Mammary epithelial cell (primary cell): ENCODE measurements at regions of chrX and their contacts with region 1.

Region 1: DNA sequence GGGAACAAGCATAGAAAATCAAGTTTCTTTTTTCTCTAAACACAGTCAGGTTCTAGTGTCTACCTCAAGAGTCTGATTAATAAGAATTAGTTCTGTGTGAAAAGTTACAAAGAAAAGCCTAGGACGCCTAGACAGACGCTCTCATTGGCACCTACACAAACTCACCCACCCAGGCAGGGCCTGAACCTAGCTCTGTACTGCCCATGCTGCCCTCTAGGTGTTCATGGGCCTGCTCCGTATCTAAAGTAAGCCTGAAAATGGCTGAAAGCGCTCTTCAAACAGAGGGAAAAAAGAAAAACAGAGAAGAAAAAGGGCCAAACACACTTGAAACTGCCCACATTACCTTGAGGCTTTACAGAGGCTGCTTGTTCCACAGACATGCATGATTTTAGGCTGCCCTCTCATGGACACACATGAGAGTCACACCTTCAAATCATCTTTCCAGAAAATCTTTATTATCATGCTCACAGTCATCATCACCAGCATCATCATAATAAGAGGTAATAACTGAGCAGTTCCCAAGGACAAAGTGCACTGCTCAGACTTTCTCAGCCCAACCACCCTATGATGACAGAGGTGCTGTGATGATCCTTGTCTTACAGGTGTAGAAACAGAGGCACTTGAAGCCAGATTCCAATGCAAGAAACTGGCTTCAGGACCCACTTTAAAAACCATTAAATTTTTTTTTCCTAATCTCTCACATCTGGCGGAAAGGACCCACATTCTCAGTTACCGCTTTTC is 49.6 kb downstream of the MAP7D2 start:
- DNase-seq: peak; percentile 52
- H3K4me3 ChIP-seq: no peak overlapping the region
- H3K27ac ChIP-seq: peak overlapping the region; percentile 64
- H3K4me1 ChIP-seq: peaks cover 17% of the 10 kb centered on the region
- H3K27me3 ChIP-seq: no peaks in the 10 kb centered on the region
- CTCF ChIP-seq: peak; percentile 64 to 68

Region 2: GRCh38 chrX:19544693-19545305 is 522.3 kb before region 1 on chrX:
- CTCF ChIA-PET with region 1: no interaction called
- dilution Hi-C with region 1: no loop called
- in situ Hi-C with region 1: no loop called
- intact Hi-C with region 1: loop called (anchors 1 kb)
- DNase-seq: peak; percentile 36
- H3K4me3 ChIP-seq: no peak overlapping the region
- H3K27ac ChIP-seq: no peak overlapping the region
- H3K4me1 ChIP-seq: no peaks in the 10 kb centered on the region
- H3K27me3 ChIP-seq: no peaks in the 10 kb centered on the region
- CTCF ChIP-seq: peak; percentile 79 to 82

Region 3: GRCh38 chrX:19739683-19740082 is 327.5 kb before region 1 on chrX:
- CTCF ChIA-PET with region 1: no interaction called
- dilution Hi-C with region 1: no loop called
- in situ Hi-C with region 1: no loop called
- intact Hi-C with region 1: loop called (anchors 1 kb)
- DNase-seq: peak; percentile 61
- H3K4me3 ChIP-seq: no peak overlapping the region
- H3K27ac ChIP-seq: no peak overlapping the region
- H3K4me1 ChIP-seq: no peaks in the 10 kb centered on the region
- H3K27me3 ChIP-seq: no peaks in the 10 kb centered on the region
- CTCF ChIP-seq: peak; percentile 42 to 68

Region 4: DNA sequence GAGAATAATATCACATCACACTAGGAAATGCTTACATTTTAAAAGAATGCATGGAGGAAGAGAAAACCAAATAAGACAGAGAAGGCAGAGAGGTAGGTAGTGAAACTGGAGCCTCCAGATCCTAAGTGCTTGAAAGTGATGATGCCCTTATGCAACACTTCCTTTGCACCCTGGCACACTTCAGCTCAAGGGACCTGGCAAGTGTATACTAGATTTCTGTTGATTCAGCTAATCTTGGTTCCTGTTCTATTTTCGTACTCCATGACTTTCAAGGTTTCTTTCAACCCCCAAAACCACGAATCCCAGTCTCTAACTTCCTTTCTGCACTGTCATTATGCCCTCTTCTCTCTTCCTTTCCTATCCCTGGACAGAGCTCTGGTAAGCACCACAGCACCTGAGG is 142.9 kb before region 1 on chrX:
- CTCF ChIA-PET with region 1: no interaction called
- dilution Hi-C with region 1: no loop called
- in situ Hi-C with region 1: loop called in 1 of 2 experiments (anchors 25 kb)
- intact Hi-C with region 1: loop called (anchors 1 kb)
- DNase-seq: no peak
- H3K4me3 ChIP-seq: no peak overlapping the region
- H3K27ac ChIP-seq: no peak overlapping the region
- H3K4me1 ChIP-seq: no peaks in the 10 kb centered on the region
- H3K27me3 ChIP-seq: no peaks in the 10 kb centered on the region
- CTCF ChIP-seq: no peak

Region 5: GRCh38 chrX:20042221-20042620 is 24.9 kb before region 1 on chrX:
- CTCF ChIA-PET with region 1: interaction called, 10 read pairs
- dilution Hi-C with region 1: no loop called
- in situ Hi-C with region 1: no loop called
- intact Hi-C with region 1: no loop called
- DNase-seq: no peak
- H3K4me3 ChIP-seq: no peak overlapping the region
- H3K27ac ChIP-seq: no peak overlapping the region
- H3K4me1 ChIP-seq: peaks cover 5% of the 10 kb centered on the region
- H3K27me3 ChIP-seq: no peaks in the 10 kb centered on the region
- CTCF ChIP-seq: no peak

Region 6: GRCh38 chrX:20128670-20129069 is 61.5 kb after region 1 on chrX:
- CTCF ChIA-PET with region 1: no interaction called
- dilution Hi-C with region 1: no loop called
- in situ Hi-C with region 1: no loop called
- intact Hi-C with region 1: loop called (anchors 2 kb)
- DNase-seq: peak; percentile 6
- H3K4me3 ChIP-seq: no peak overlapping the region
- H3K27ac ChIP-seq: no peak overlapping the region
- H3K4me1 ChIP-seq: no peaks in the 10 kb centered on the region
- H3K27me3 ChIP-seq: no peaks in the 10 kb centered on the region
- CTCF ChIP-seq: no peak

Region 7: GRCh38 chrX:20212486-20213089 is 145.4 kb after region 1 on chrX:
- CTCF ChIA-PET with region 1: no interaction called
- dilution Hi-C with region 1: no loop called
- in situ Hi-C with region 1: no loop called
- intact Hi-C with region 1: no loop called
- DNase-seq: no peak
- H3K4me3 ChIP-seq: no peak overlapping the region
- H3K27ac ChIP-seq: no peak overlapping the region
- H3K4me1 ChIP-seq: peaks cover 4% of the 10 kb centered on the region
- H3K27me3 ChIP-seq: no peaks in the 10 kb centered on the region
- CTCF ChIP-seq: no peak